Common myeloid progenitor, CD34-positive (primary cell): ENCODE measurements at regions of chr22 and their contacts with region 1.

Region 1: GRCh38 chr22:22884010-22884887 is 3.4 kb upstream of the IGLL5 start:
- DNase-seq: peak; percentile 80 to 88 (median 82)
- H3K4me3 ChIP-seq: no peak overlapping the region
- H3K27ac ChIP-seq: no peak overlapping the region
- H3K4me1 ChIP-seq: peaks cover 0 to 7% (median 1%) of the 10 kb centered on the region in 4 experiments
- H3K27me3 ChIP-seq: peaks cover 0 to 8% (median 0%) of the 10 kb centered on the region in 5 experiments

Region 2: GRCh38 chr22:22584722-22585121 is 299.5 kb before region 1 on chr22:
- CTCF ChIA-PET with region 1: no interaction called
- POLR2A ChIA-PET with region 1: no interaction called
- DNase-seq: no peak
- H3K4me3 ChIP-seq: no peak overlapping the region
- H3K27ac ChIP-seq: no peak overlapping the region
- H3K4me1 ChIP-seq: no peaks in the 10 kb centered on the region
- H3K27me3 ChIP-seq: peaks cover 0 to 12% (median 4%) of the 10 kb centered on the region in 5 experiments

Region 3: GRCh38 chr22:22770280-22770871 is 113.9 kb before region 1 on chr22:
- CTCF ChIA-PET with region 1: interaction called, 15 read pairs
- POLR2A ChIA-PET with region 1: no interaction called
- DNase-seq: peak; percentile 36 to 56 (median 47)
- H3K4me3 ChIP-seq: no peak overlapping the region
- H3K27ac ChIP-seq: no peak overlapping the region
- H3K4me1 ChIP-seq: no peaks in the 10 kb centered on the region
- H3K27me3 ChIP-seq: peaks cover 0 to 7% (median 5%) of the 10 kb centered on the region in 5 experiments

Region 4: GRCh38 chr22:22810018-22810427 is 74.2 kb before region 1 on chr22:
- CTCF ChIA-PET with region 1: interaction called, 20 read pairs
- POLR2A ChIA-PET with region 1: no interaction called
- DNase-seq: peak; percentile 50 to 67 (median 59)
- H3K4me3 ChIP-seq: no peak overlapping the region
- H3K27ac ChIP-seq: no peak overlapping the region
- H3K4me1 ChIP-seq: peaks cover 0 to 11% (median 3%) of the 10 kb centered on the region in 4 experiments
- H3K27me3 ChIP-seq: peaks cover 0 to 4% (median 0%) of the 10 kb centered on the region in 5 experiments

Region 5: GRCh38 chr22:22855617-22856308 is 28.5 kb before region 1 on chr22:
- CTCF ChIA-PET with region 1: interaction called, 57 read pairs
- POLR2A ChIA-PET with region 1: interaction called, 4 read pairs
- DNase-seq: peak; percentile 40 to 70 (median 58)
- H3K4me3 ChIP-seq: no peak overlapping the region
- H3K27ac ChIP-seq: no peak overlapping the region
- H3K4me1 ChIP-seq: no peaks in the 10 kb centered on the region
- H3K27me3 ChIP-seq: peaks cover 0 to 11% (median 5%) of the 10 kb centered on the region in 5 experiments

Region 6: GRCh38 chr22:22913989-22914388 is 29.7 kb after region 1 on chr22:
- CTCF ChIA-PET with region 1: interaction called, 11 read pairs
- POLR2A ChIA-PET with region 1: no interaction called
- DNase-seq: peak in 2 of 3 donors; percentile 38 to 61
- H3K4me3 ChIP-seq: no peak overlapping the region
- H3K27ac ChIP-seq: no peak overlapping the region
- H3K4me1 ChIP-seq: peaks cover 0 to 14% (median 4%) of the 10 kb centered on the region in 4 experiments
- H3K27me3 ChIP-seq: no peaks in the 10 kb centered on the region

Region 7: GRCh38 chr22:22968366-22968765 is 84.1 kb after region 1 on chr22:
- CTCF ChIA-PET with region 1: no interaction called
- POLR2A ChIA-PET with region 1: no interaction called
- DNase-seq: no peak
- H3K4me3 ChIP-seq: no peak overlapping the region
- H3K27ac ChIP-seq: no peak overlapping the region
- H3K4me1 ChIP-seq: no peaks in the 10 kb centered on the region
- H3K27me3 ChIP-seq: peaks cover 0 to 6% (median 4%) of the 10 kb centered on the region in 5 experiments